GM18951 (cell line): ENCODE measurements at regions of chr11 and their contacts with region 1.

Region 1: GRCh38 chr11:119474682-119475596 is 52.0 kb upstream of the THY1 start:
- POLR2A ChIP-seq: no peak

Region 2: GRCh38 chr11:119144825-119145486 is 330.0 kb before region 1 on chr11:
- in situ Hi-C with region 1: no loop called
- POLR2A ChIP-seq: no peak

Region 3: GRCh38 chr11:119356349-119357031 is 118.4 kb before region 1 on chr11:
- in situ Hi-C with region 1: loop called (anchors 5 kb)
- POLR2A ChIP-seq: no peak